GM12878 (cell line): ENCODE measurements at regions of chr1 and their contacts with region 1.

Region 1: GRCh38 chr1:111222308-111223125 is 5.0 kb upstream of the CHI3L2 start:
- DNase-seq: peak; percentile 81
- ATAC-seq: peak; percentile 57
- H3K4me3 ChIP-seq: peak overlapping the region; percentile 23; the same call in 1 of the 2 replicates
- H3K27ac ChIP-seq: peak overlapping the region; percentile 100
- H3K4me1 ChIP-seq: peaks cover 88% of the 10 kb centered on the region
- H3K27me3 ChIP-seq: no peaks in the 10 kb centered on the region
- CTCF ChIP-seq: peak; percentile 96 to 97 (median 96); a peak in 5 of 6 replicates
- EP300 ChIP-seq: no peak
- POLR2A ChIP-seq: no peak
- RAD21 ChIP-seq: peak; percentile 99

Region 2: DNA sequence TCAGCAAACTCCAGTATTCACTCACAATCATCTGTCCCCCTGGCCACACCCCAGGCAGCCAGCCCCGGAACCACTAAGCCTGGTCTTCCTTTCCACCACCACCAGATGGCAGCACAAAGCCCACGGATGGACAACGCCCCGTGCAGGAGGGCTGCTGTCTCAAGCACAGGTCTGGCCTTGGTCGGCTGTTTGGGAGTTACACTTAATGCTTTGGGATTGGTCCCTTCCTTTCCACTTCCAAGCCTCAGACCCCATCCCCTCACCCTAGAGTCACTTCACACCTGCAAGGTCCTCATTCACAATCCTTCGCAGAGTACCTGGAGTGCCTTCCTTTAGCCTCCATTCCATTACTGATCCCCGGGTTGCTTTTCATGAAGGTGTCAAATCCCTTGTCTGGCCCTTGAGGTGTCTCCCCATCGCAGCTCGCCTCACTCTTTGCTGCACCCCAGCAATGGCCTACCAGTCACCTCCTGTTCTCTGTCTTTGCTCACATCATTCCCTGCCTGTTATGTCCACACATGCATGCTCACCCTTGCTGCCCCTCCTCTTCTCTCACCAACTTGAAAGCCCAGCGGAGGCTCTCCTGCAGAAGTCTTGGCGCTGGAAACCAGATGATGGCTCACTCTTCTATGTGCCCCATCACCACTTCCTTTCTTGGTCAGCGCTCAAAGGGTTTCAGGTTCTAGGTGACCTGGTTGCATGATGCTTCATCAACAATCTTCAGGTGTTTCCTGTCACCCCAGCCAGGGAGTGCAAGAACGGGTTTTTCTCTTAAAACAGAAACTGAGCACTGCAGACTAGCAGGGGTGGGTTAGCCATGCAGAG is 591.5 kb before region 1 on chr1:
- CTCF ChIA-PET with region 1: no interaction called
- POLR2A ChIA-PET with region 1: no interaction called
- RAD21 ChIA-PET with region 1: no interaction called
- SMC1A ChIA-PET with region 1: no interaction called
- in situ Hi-C with region 1: no loop called
- intact Hi-C with region 1: loop called (anchors 10 kb)
- DNase-seq: peak; percentile 84
- ATAC-seq: peak; percentile 85
- H3K4me3 ChIP-seq: peak overlapping the region; percentile 10; the same call in 1 of the 2 replicates
- H3K27ac ChIP-seq: peak overlapping the region; percentile 66
- H3K4me1 ChIP-seq: peaks cover 67% of the 10 kb centered on the region
- H3K27me3 ChIP-seq: no peaks in the 10 kb centered on the region
- CTCF ChIP-seq: peak; percentile 84 to 89 (median 86)
- EP300 ChIP-seq: no peak
- POLR2A ChIP-seq: no peak
- RAD21 ChIP-seq: peak; percentile 94

Region 3: GRCh38 chr1:111030590-111030989 is 191.9 kb before region 1 on chr1:
- CTCF ChIA-PET with region 1: interaction called, 38 read pairs
- POLR2A ChIA-PET with region 1: interaction called, 7 read pairs
- RAD21 ChIA-PET with region 1: interaction called, 21 read pairs
- SMC1A ChIA-PET with region 1: interaction called, 21 read pairs
- in situ Hi-C with region 1: no loop called
- intact Hi-C with region 1: loop called (anchors 2 kb)
- DNase-seq: peak; percentile 45
- ATAC-seq: peak; percentile 95
- H3K4me3 ChIP-seq: no peak overlapping the region
- H3K27ac ChIP-seq: no peak overlapping the region
- H3K4me1 ChIP-seq: no peaks in the 10 kb centered on the region
- H3K27me3 ChIP-seq: no peaks in the 10 kb centered on the region
- CTCF ChIP-seq: peak; percentile 80 to 90 (median 90)
- EP300 ChIP-seq: no peak
- POLR2A ChIP-seq: no peak
- RAD21 ChIP-seq: peak; percentile 69

Region 4: DNA sequence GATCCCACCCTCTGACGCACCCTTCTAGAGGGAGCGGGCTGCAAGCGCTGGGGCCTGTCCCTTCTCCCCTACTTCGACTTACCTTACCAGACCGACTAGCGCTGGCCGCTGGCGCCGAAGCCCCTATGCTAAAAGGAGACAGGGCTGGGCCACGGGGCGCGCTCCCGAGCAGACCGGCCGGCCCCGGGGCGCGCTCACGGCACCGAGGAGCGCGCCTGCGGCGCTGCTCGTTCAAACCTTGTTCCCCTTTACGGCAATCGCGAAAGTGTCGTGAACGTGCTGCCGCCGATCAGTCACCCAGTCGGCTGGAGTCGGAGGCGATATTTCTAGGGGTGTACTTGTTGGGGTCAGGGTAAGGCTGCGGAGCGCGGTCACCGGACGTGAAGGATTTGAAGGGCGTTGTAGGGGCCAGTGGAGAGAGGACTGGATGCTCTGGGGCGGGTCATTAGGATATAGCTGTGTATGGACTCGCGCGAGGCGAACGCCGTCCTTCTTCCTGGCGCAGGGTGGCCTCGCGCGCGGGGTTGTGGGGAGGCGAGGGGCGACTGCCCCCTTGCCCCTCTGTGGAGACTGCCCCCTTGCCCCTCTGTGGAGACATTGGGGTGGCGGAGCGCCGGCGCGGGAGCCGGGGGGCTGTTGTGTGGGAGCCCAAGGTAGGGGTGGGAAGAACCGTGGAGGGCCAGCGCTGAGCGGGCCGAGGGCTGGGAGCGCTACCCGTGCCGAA is 82.4 kb before region 1 on chr1 and contains the starts of genes CEPT1 and DRAM2:
- CTCF ChIA-PET with region 1: interaction called, 36 read pairs
- POLR2A ChIA-PET with region 1: interaction called, 19 read pairs
- RAD21 ChIA-PET with region 1: interaction called, 109 read pairs
- SMC1A ChIA-PET with region 1: interaction called, 164 read pairs
- in situ Hi-C with region 1: no loop called
- intact Hi-C with region 1: loop called (anchors 2 kb)
- DNase-seq: peak; percentile 76
- ATAC-seq: peak; percentile 73
- H3K4me3 ChIP-seq: peak within 1 kb of the TSS; percentile 95
- H3K27ac ChIP-seq: peak within 1 kb of the TSS; percentile 89
- H3K4me1 ChIP-seq: peaks cover 14% of the 10 kb centered on the region
- H3K27me3 ChIP-seq: no peaks in the 10 kb centered on the region
- CTCF ChIP-seq: no peak
- EP300 ChIP-seq: no peak
- POLR2A ChIP-seq: peak; percentile 90
- RAD21 ChIP-seq: no peak
- polyA plus RNA-seq, gene CEPT1: 29.4 to 55.5 TPM
- polyA plus RNA-seq, gene DRAM2: 88.3 to 146 TPM

Region 5: GRCh38 chr1:111203681-111204200 is 18.8 kb before region 1 on chr1:
- CTCF ChIA-PET with region 1: interaction called, 239 read pairs
- POLR2A ChIA-PET with region 1: interaction called, 371 read pairs
- RAD21 ChIA-PET with region 1: interaction called, 542 read pairs
- SMC1A ChIA-PET with region 1: interaction called, 284 read pairs
- in situ Hi-C with region 1: no loop called
- intact Hi-C with region 1: loop called (anchors 1 kb)
- DNase-seq: peak; percentile 77
- ATAC-seq: peak; percentile 57
- H3K4me3 ChIP-seq: peak overlapping the region; percentile 87
- H3K27ac ChIP-seq: peak overlapping the region; percentile 92
- H3K4me1 ChIP-seq: peaks cover 39% of the 10 kb centered on the region
- H3K27me3 ChIP-seq: no peaks in the 10 kb centered on the region
- CTCF ChIP-seq: no peak
- EP300 ChIP-seq: peak; percentile 30 to 69; a peak in 3 of 4 replicates
- POLR2A ChIP-seq: peak; percentile 72; the same call in 1 of the 2 replicates
- RAD21 ChIP-seq: 0 out of 2 replicates have a peak, but pooled peaks have one; percentile 2

Region 6: GRCh38 chr1:111481387-111482221 is 259.1 kb after region 1 on chr1:
- CTCF ChIA-PET with region 1: interaction called, 7 read pairs
- POLR2A ChIA-PET with region 1: no interaction called
- RAD21 ChIA-PET with region 1: interaction called, 6 read pairs
- SMC1A ChIA-PET with region 1: interaction called, 4 read pairs
- in situ Hi-C with region 1: no loop called
- intact Hi-C with region 1: loop called (anchors 10 kb)
- DNase-seq: peak; percentile 48
- ATAC-seq: peak; percentile 88
- H3K4me3 ChIP-seq: no peak overlapping the region
- H3K27ac ChIP-seq: no peak overlapping the region
- H3K4me1 ChIP-seq: peaks cover 16% of the 10 kb centered on the region
- H3K27me3 ChIP-seq: no peaks in the 10 kb centered on the region
- CTCF ChIP-seq: peak; percentile 79 to 97 (median 83)
- EP300 ChIP-seq: no peak
- POLR2A ChIP-seq: no peak
- RAD21 ChIP-seq: peak; percentile 95

Region 7: GRCh38 chr1:111769517-111770146 is 547.1 kb after region 1 on chr1:
- CTCF ChIA-PET with region 1: interaction called, 9 read pairs
- POLR2A ChIA-PET with region 1: no interaction called
- RAD21 ChIA-PET with region 1: interaction called, 18 read pairs
- SMC1A ChIA-PET with region 1: interaction called, 5 read pairs
- in situ Hi-C with region 1: loop called (anchors 10 kb)
- intact Hi-C with region 1: loop called (anchors 2 kb)
- DNase-seq: peak; percentile 44
- ATAC-seq: peak; percentile 79
- H3K4me3 ChIP-seq: no peak overlapping the region
- H3K27ac ChIP-seq: no peak overlapping the region
- H3K4me1 ChIP-seq: no peaks in the 10 kb centered on the region
- H3K27me3 ChIP-seq: no peaks in the 10 kb centered on the region
- CTCF ChIP-seq: peak; percentile 66 to 87 (median 78)
- EP300 ChIP-seq: no peak
- POLR2A ChIP-seq: no peak
- RAD21 ChIP-seq: peak; percentile 92